Lower leg skin (tissue), 4 donors: ENCODE measurements at regions of chr3 and their contacts with region 1.

Region 1: DNA sequence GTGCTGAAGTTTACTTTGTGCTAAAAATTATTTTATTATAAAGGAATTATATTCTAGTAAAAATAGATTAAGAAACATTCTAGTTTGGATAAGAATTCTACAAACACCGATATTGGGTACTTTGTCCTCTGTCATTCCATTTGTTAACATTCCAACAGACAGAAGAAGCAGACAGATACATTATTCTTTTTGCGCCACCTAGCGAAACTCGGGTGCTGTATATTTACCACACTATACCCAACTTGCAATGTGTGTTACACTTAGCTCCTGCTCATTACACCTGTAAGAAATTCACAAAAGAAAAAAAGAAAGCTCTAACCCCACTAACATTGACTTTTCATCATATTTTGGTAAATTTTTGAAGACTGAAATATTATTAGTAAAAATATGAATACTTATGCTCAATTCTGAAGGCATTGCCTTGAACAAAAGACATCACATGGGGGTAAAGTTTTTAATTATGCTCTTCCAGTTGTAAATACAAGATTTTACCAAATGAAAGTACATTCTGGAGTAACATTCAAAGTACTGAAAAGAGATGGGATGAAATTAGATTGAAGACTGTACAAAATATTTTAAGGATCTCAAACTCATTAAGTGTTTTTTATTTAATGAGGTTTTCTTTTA is 136.5 kb upstream of the MLF1 start:
- DNase-seq: peak in 1 of 2 donors; percentile 59
- H3K4me3 ChIP-seq: no peak overlapping the region
- CTCF ChIP-seq: no peak
- POLR2A ChIP-seq: no peak

Region 2: GRCh38 chr3:157029365-157029790 is 1405.1 kb before region 1 on chr3:
- intact Hi-C with region 1: no loop called
- DNase-seq: no peak
- H3K4me3 ChIP-seq: no peak overlapping the region
- CTCF ChIP-seq: no peak
- POLR2A ChIP-seq: no peak

Region 3: GRCh38 chr3:157624801-157625200 is 809.7 kb before region 1 on chr3:
- intact Hi-C with region 1: loop called (anchors 5 kb)
- DNase-seq: no peak
- H3K4me3 ChIP-seq: no peak overlapping the region
- CTCF ChIP-seq: no peak
- POLR2A ChIP-seq: no peak

Region 4: GRCh38 chr3:158330870-158331269 is 103.7 kb before region 1 on chr3:
- intact Hi-C with region 1: no loop called
- DNase-seq: no peak
- H3K4me3 ChIP-seq: no peak overlapping the region
- CTCF ChIP-seq: no peak
- POLR2A ChIP-seq: no peak

Region 5: GRCh38 chr3:158539414-158540014 is 105.0 kb after region 1 on chr3:
- intact Hi-C with region 1: no loop called
- DNase-seq: no peak
- H3K4me3 ChIP-seq: no peak overlapping the region
- CTCF ChIP-seq: no peak
- POLR2A ChIP-seq: no peak